HEK293 (cell line): ENCODE measurements at regions of chr17 and their contacts with region 1.

Region 1: GRCh38 chr17:76370261-76370993 is 14.0 kb upstream of the SPHK1 start:
- H3K4me3 ChIP-seq: no peak overlapping the region
- H3K27ac ChIP-seq: no peak overlapping the region
- H3K4me1 ChIP-seq: peaks cover 12% of the 10 kb centered on the region
- CTCF ChIP-seq: no peak

Region 2: GRCh38 chr17:76353599-76354316 is 16.7 kb before region 1 on chr17 and contains the start of gene PRPSAP1:
- CTCF ChIA-PET with region 1: interaction called, 6 read pairs
- POLR2A ChIA-PET with region 1: interaction called, 13 read pairs
- H3K4me3 ChIP-seq: peak within 1 kb of the TSS; percentile 90
- H3K27ac ChIP-seq: peak within 1 kb of the TSS; percentile 96
- H3K4me1 ChIP-seq: peaks cover 12% of the 10 kb centered on the region; the same call in 1 of the 2 replicates
- CTCF ChIP-seq: peak; percentile 69

Region 3: DNA sequence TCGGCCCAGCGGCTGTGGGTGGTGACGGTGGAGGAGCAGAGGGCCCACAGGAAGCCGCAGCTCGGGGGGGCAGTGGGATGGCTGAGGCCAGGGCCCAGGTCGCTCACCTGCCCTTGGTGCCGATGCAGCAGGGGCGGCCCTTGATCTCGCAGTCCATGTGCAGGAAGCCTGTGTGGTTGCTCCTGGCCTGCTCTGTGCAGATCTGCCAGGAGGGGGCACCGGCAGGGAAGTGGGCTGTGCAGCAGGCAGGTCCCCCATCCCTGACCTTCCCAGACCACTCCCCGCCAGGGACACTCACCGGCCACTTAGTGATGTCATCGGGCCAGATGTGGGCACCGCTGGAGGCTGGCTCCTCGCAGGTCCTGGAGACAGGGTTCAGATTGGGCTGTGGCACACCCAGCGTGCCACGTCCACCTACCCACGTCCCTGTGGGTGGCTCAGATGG is 103.1 kb after region 1 on chr17:
- CTCF ChIA-PET with region 1: no interaction called
- POLR2A ChIA-PET with region 1: no interaction called
- H3K4me3 ChIP-seq: no peak overlapping the region
- H3K27ac ChIP-seq: no peak overlapping the region
- H3K4me1 ChIP-seq: no peaks in the 10 kb centered on the region
- CTCF ChIP-seq: 0 out of 2 replicates have a peak, but pooled peaks have one; percentile 44